Mammary epithelial cell (primary cell): ENCODE measurements at regions of chr1 and their contacts with region 1.

Region 1: GRCh38 chr1:211928993-211929637 is 98.6 kb upstream of the LPGAT1 start:
- DNase-seq: peak; percentile 44
- H3K4me3 ChIP-seq: no peak overlapping the region
- H3K27ac ChIP-seq: peak overlapping the region; percentile 48
- H3K4me1 ChIP-seq: peaks cover 32% of the 10 kb centered on the region
- H3K27me3 ChIP-seq: no peaks in the 10 kb centered on the region
- CTCF ChIP-seq: no peak

Region 2: DNA sequence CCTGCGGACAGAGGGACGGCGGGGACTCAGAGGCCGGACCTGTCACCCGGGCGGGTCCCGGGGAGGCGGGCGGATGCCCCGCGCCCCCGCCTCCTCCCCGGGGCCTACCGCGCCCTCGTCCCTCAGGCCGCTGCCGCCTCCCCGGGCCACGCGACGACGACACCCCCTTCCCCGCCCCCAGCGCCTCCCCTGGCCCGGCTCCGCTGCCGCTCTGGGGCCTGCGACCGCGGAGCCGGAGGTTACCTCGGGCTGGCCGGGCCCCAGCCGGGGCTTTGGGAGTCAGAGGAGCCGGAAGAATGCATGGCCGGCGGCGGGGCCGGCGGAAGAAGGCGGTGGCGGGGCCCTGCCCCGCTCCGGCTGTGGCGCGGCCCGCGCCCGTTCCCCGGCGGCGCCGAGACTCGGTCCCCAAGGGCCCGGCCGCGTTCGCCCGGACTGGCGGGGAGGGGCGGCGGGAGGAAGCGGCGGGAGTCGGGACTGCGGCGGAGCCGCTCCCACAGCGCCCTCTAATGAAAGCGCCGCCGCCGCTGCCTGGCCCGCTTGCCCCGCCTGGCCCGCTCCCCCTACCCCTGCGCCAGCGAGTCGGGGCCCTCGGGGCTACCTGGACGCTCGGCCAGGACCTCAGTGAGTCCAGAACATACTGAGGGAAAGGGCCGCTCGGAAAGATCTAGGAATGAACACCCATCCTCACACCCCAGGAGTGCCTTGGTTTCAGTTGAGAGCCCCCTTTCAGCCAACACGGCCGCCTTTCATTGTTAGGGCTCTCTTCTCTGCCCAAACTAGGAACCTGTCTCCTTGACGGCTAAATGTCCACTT is 98.6 kb before region 1 on chr1 and contains the start of gene LPGAT1:
- CTCF ChIA-PET with region 1: no interaction called
- dilution Hi-C with region 1: no loop called
- in situ Hi-C with region 1: no loop called
- intact Hi-C with region 1: loop called (anchors 5 kb)
- DNase-seq: peak; percentile 53
- H3K4me3 ChIP-seq: peak within 1 kb of the TSS; percentile 69 to 84 (median 75)
- H3K27ac ChIP-seq: peak within 1 kb of the TSS; percentile 44
- H3K4me1 ChIP-seq: peaks cover 15% of the 10 kb centered on the region
- H3K27me3 ChIP-seq: no peaks in the 10 kb centered on the region
- CTCF ChIP-seq: peak; percentile 19 to 59
- total RNA-seq, gene LPGAT1: 42.0 to 44.5 TPM

Region 3: GRCh38 chr1:211885747-211886522 is 43.2 kb before region 1 on chr1:
- CTCF ChIA-PET with region 1: no interaction called
- dilution Hi-C with region 1: no loop called
- in situ Hi-C with region 1: no loop called
- intact Hi-C with region 1: no loop called
- DNase-seq: no peak
- H3K4me3 ChIP-seq: no peak overlapping the region
- H3K27ac ChIP-seq: no peak overlapping the region
- H3K4me1 ChIP-seq: no peaks in the 10 kb centered on the region
- H3K27me3 ChIP-seq: peaks cover 2% of the 10 kb centered on the region
- CTCF ChIP-seq: no peak

Region 4: GRCh38 chr1:211918843-211919414 is 10.2 kb before region 1 on chr1:
- CTCF ChIA-PET with region 1: no interaction called
- dilution Hi-C with region 1: no loop called
- in situ Hi-C with region 1: no loop called
- intact Hi-C with region 1: loop called (anchors 1 kb)
- DNase-seq: no peak
- H3K4me3 ChIP-seq: no peak overlapping the region
- H3K27ac ChIP-seq: no peak overlapping the region
- H3K4me1 ChIP-seq: peaks cover 8% of the 10 kb centered on the region
- H3K27me3 ChIP-seq: no peaks in the 10 kb centered on the region
- CTCF ChIP-seq: no peak

Region 5: DNA sequence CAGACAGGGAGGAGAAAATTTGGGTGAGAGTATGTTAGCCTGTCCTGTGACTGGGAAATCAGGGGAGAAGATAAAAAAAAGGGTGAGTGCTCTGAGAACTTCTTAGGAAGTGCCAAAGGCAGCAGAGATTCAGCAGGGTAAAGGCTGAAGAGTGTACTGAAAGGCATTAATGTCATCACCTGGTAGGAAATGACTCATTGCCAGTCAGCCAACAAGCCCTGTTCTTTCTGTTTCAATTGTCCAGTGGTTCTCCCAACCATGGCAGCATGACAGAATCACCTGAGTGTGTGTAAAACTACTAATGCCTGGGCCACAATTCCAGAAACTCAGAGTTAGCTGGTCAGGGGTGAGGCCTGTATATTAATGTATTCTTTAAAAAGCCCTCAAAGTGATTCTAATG is 22.7 kb after region 1 on chr1:
- CTCF ChIA-PET with region 1: no interaction called
- dilution Hi-C with region 1: no loop called
- in situ Hi-C with region 1: no loop called
- intact Hi-C with region 1: no loop called
- DNase-seq: peak; percentile 95
- H3K4me3 ChIP-seq: no peak overlapping the region
- H3K27ac ChIP-seq: peak overlapping the region; percentile 70
- H3K4me1 ChIP-seq: peaks cover 18% of the 10 kb centered on the region
- H3K27me3 ChIP-seq: no peaks in the 10 kb centered on the region
- CTCF ChIP-seq: no peak

Region 6: GRCh38 chr1:212234431-212235395 is 305.6 kb after region 1 on chr1:
- CTCF ChIA-PET with region 1: no interaction called
- dilution Hi-C with region 1: no loop called
- in situ Hi-C with region 1: no loop called
- intact Hi-C with region 1: no loop called
- DNase-seq: peak; percentile 95
- H3K4me3 ChIP-seq: no peak overlapping the region
- H3K27ac ChIP-seq: peak overlapping the region; percentile 39
- H3K4me1 ChIP-seq: peaks cover 22% of the 10 kb centered on the region
- H3K27me3 ChIP-seq: no peaks in the 10 kb centered on the region
- CTCF ChIP-seq: no peak